ENCODE measurements at regions of chr16 and their contacts with region 1.

Region 1: DNA sequence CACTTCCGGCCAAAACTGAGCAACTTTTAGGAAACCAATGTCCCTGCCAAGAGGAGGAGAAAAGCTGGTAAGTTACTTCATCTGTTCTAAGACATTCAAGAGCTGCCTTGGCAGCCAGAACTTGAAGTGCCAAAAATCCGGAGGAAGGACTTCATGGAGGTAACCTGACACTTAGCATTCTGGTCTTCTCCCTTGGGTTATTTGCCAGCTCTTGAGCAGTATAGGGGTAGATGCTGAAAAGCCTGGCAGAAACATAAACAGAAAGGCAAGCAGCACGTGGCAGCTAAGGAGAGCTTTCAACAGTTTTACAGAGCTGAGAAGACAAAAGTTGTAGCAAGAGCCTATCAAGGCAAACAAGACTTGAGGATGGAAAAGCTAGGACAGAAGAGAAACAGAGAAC is 53.2 kb downstream of the CDYL2 start:
- DNase-seq: no peak
- CTCF ChIP-seq: no peak

Region 2: DNA sequence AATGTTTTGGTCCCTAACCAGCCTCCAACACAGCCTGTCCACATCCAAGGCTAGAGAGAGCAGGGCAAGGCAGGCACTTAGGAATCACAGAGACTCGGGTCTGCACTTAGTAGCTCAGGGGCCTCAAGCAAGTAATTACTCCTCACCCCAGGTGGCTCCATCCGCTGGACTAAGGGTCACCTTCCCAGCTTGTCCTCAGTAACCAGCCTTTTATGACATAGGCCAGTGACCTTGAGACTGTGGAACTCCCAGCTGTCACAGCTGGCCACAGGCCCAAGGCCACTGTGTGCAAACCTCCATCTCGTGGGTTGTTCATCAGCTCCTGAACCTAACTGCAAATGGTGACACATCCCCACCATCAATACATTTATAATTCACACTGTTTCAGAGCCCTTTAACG is 15.3 kb before region 1 on chr16:
- CTCF ChIA-PET with region 1: interaction called, 11 read pairs
- POLR2A ChIA-PET with region 1: no interaction called
- DNase-seq: no peak
- CTCF ChIP-seq: no peak